Colonic mucosa (tissue), 4 donors: ENCODE measurements at regions of chr10 and their contacts with region 1.

Region 1: DNA sequence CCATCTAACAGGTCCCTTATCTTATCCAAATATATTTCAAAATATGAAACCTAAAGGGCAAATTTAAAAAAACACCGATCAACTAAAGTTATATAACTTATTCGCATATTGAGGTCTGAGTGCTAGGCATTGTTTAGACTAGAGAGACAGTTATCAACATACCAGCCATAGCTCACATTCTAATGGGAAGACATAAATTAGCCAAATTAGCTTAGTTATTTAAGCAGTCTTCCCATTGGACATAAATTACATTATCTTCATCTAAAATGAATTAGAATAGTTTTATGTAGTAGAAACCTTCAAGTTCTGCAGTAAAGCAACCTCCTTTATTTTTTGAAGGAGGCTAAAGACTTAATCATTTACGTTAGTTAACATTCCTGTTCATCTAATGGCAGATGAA is 17.4 kb downstream of the KIF5B start:
- DNase-seq: no peak
- H3K4me3 ChIP-seq: no peak overlapping the region
- H3K27ac ChIP-seq: no peak overlapping the region
- H3K4me1 ChIP-seq: no peaks in the 10 kb centered on the region
- H3K27me3 ChIP-seq: no peaks in the 10 kb centered on the region
- CTCF ChIP-seq: no peak

Region 2: DNA sequence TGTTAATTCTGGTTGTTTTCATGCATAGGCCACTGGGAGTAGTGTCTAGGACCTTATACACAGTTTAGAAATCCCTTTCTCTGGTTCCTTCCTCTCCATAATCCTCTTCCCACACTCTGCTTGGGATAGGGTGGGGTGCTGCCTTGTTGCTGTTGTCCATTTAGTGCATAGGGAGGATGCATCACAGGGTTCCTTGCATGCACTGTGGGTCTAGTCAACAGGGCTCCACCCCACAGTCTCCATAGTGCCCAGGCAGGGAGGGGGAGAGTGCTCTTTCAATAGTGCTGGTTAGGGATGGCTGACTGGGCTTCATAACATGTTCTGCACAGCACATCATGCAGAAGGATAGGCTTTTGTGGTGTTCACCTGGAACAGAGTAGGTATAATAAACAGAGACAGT is 191.3 kb before region 1 on chr10:
- intact Hi-C with region 1: loop called (anchors 10 kb)
- DNase-seq: no peak
- H3K4me3 ChIP-seq: no peak overlapping the region
- H3K27ac ChIP-seq: no peak overlapping the region
- H3K4me1 ChIP-seq: no peaks in the 10 kb centered on the region
- H3K27me3 ChIP-seq: no peaks in the 10 kb centered on the region
- CTCF ChIP-seq: no peak